Activated CD4-positive, alpha-beta T cell treated with anti-CD3 and anti-CD28 coated beads for 36 hours (primary cell): ENCODE measurements at regions of chr12 and their contacts with region 1.

Region 1: GRCh38 chr12:60465060-60465459 is 869.2 kb downstream of the SLC16A7 start:
- DNase-seq: no peak
- ATAC-seq: no peak
- H3K4me3 Mint-ChIP-seq: no peak overlapping the region
- H3K27ac Mint-ChIP-seq: no peak overlapping the region
- H3K4me1 Mint-ChIP-seq: no peaks in the 10 kb centered on the region
- H3K27me3 Mint-ChIP-seq: no peaks in the 10 kb centered on the region

Region 2: GRCh38 chr12:60475825-60476224 is 10.8 kb after region 1 on chr12:
- CTCF ChIA-PET with region 1: no interaction called
- POLR2A ChIA-PET with region 1: no interaction called
- intact Hi-C with region 1: loop called in 1 of 2 experiments (anchors 2 kb)
- DNase-seq: no peak
- ATAC-seq: no peak
- H3K4me3 Mint-ChIP-seq: no peak overlapping the region
- H3K27ac Mint-ChIP-seq: no peak overlapping the region
- H3K4me1 Mint-ChIP-seq: no peaks in the 10 kb centered on the region
- H3K27me3 Mint-ChIP-seq: no peaks in the 10 kb centered on the region

Region 3: DNA sequence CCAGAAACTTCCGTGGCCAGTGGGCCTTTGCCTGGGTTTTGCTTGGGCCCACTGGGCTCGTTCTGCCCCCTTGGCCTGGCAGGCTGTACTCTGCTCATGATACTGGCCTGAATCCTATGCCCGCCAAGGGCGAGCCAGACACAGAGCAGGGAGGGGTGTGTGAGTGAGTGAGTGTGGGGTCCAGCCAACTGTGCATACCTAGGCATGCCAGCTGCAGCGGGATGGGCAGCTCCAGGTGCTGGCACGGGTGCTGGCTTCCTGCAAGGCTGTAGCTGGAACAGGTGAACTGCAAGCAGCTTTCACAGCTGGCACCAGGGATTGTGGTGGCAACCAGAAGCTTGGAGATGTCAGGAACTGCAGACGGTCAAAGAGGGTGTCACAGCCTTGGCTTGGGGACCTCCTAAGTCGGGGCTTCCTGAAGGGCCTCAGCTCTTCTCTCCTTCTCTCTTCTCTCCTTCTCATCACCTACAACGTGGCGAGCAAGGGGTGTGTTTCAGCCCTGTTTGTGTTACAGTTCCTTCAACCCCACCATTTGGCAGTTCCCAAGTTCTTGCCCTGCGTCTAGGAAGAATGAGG is 407.2 kb after region 1 on chr12:
- CTCF ChIA-PET with region 1: no interaction called
- POLR2A ChIA-PET with region 1: no interaction called
- intact Hi-C with region 1: no loop called
- DNase-seq: no peak
- ATAC-seq: no peak
- H3K4me3 Mint-ChIP-seq: no peak overlapping the region
- H3K27ac Mint-ChIP-seq: no peak overlapping the region
- H3K4me1 Mint-ChIP-seq: no peaks in the 10 kb centered on the region
- H3K27me3 Mint-ChIP-seq: no peaks in the 10 kb centered on the region